ENCODE measurements at regions of chr20 and their contacts with region 1.

Region 1: GRCh38 chr20:10553326-10553984 is 118.3 kb downstream of the SLX4IP start:
- DNase-seq: peak; percentile 77 to 88
- ATAC-seq: peak; percentile 71
- H3K4me3 ChIP-seq: no peak overlapping the region
- H3K27ac ChIP-seq: no peak overlapping the region
- H3K4me1 ChIP-seq: peaks cover 4 to 5% of the 10 kb centered on the region in 2 donors
- H3K27me3 ChIP-seq: no peaks in the 10 kb centered on the region

Region 2: DNA sequence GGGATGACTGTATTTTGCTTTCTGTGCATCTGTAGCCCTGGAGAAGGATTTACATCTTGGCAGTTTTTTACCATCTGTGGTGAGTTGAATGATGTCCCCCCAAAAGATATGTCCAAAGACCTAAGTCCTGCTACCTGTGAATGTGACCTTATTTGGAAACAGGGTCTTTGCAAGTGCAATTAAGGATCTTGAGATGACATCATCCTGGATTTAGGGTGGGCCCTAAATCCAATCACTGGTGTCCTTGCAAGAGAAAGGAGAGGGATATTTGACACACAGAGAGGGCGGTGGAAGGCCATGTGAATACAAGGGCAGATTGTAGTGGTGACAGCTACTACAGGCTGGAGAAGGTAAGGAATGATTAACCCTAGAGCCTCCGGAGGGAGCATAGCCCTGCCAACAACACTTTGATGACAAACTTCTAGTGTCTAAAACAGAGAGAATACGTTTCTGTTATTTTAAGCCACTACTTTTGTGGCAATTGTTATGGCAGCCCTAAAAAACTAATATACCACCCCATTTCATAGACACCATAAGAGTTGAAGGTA is 154.6 kb before region 1 on chr20:
- intact Hi-C with region 1: no loop called
- DNase-seq: no peak
- ATAC-seq: no peak
- H3K4me3 ChIP-seq: no peak overlapping the region
- H3K27ac ChIP-seq: no peak overlapping the region
- H3K4me1 ChIP-seq: no peaks in the 10 kb centered on the region
- H3K27me3 ChIP-seq: no peaks in the 10 kb centered on the region

Region 3: GRCh38 chr20:10469599-10469998 is 83.9 kb before region 1 on chr20:
- intact Hi-C with region 1: loop called in 1 of 2 experiments (anchors 5 kb)
- DNase-seq: peak in 1 of 2 donors; percentile 69
- ATAC-seq: peak; percentile 84
- H3K4me3 ChIP-seq: no peak overlapping the region
- H3K27ac ChIP-seq: peak overlapping the region in 1 of 2 donors; percentile 13
- H3K4me1 ChIP-seq: peaks cover 5 to 8% of the 10 kb centered on the region in 2 donors
- H3K27me3 ChIP-seq: no peaks in the 10 kb centered on the region

Region 4: GRCh38 chr20:10619427-10619826 is 66.0 kb after region 1 on chr20:
- intact Hi-C with region 1: no loop called
- DNase-seq: no peak
- ATAC-seq: no peak
- H3K4me3 ChIP-seq: no peak overlapping the region
- H3K27ac ChIP-seq: no peak overlapping the region
- H3K4me1 ChIP-seq: peaks cover 0 to 3% of the 10 kb centered on the region in 2 donors
- H3K27me3 ChIP-seq: no peaks in the 10 kb centered on the region

Region 5: DNA sequence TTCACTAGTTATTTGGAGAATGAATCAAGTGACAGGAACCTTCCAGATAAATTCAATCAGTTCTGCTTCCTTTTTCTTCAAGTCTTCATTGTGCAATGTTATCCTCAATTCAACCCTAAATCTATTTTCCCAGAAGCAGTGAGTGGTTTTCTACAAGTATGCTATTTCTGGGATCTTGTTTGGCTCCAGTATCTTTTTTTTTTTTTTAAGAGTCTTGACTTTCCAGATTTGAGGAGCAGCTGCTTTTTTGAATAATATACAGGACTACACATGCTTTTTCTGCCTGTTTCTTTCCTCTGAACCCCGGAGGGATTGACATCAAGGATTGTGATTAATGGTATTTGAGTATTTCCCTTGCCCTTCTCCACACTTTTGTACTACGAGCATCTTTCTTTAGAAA is 459.5 kb after region 1 on chr20:
- intact Hi-C with region 1: loop called in 1 of 2 experiments (anchors 5 kb)
- DNase-seq: no peak
- ATAC-seq: peak; percentile 73
- H3K4me3 ChIP-seq: no peak overlapping the region
- H3K27ac ChIP-seq: no peak overlapping the region
- H3K4me1 ChIP-seq: no peaks in the 10 kb centered on the region
- H3K27me3 ChIP-seq: no peaks in the 10 kb centered on the region

Region 6: GRCh38 chr20:11274141-11274594 is 720.7 kb after region 1 on chr20:
- intact Hi-C with region 1: loop called (anchors 2 to 5 kb)
- DNase-seq: peak in 1 of 2 donors; percentile 48
- ATAC-seq: peak; percentile 86
- H3K4me3 ChIP-seq: no peak overlapping the region
- H3K27ac ChIP-seq: no peak overlapping the region
- H3K4me1 ChIP-seq: peaks cover 0 to 2% of the 10 kb centered on the region in 2 donors
- H3K27me3 ChIP-seq: no peaks in the 10 kb centered on the region

Region 7: GRCh38 chr20:11549172-11550103 is 996.0 kb after region 1 on chr20:
- intact Hi-C with region 1: loop called (anchors 5 kb)
- DNase-seq: no peak
- ATAC-seq: no peak
- H3K4me3 ChIP-seq: no peak overlapping the region
- H3K27ac ChIP-seq: no peak overlapping the region
- H3K4me1 ChIP-seq: no peaks in the 10 kb centered on the region
- H3K27me3 ChIP-seq: peaks cover 0 to 2% of the 10 kb centered on the region in 2 donors

Measured in aorta (tissue), 5 donors.